Naive thymus-derived CD4-positive, alpha-beta T cell (primary cell): ENCODE measurements at regions of chr19 and their contacts with region 1.

Region 1: DNA sequence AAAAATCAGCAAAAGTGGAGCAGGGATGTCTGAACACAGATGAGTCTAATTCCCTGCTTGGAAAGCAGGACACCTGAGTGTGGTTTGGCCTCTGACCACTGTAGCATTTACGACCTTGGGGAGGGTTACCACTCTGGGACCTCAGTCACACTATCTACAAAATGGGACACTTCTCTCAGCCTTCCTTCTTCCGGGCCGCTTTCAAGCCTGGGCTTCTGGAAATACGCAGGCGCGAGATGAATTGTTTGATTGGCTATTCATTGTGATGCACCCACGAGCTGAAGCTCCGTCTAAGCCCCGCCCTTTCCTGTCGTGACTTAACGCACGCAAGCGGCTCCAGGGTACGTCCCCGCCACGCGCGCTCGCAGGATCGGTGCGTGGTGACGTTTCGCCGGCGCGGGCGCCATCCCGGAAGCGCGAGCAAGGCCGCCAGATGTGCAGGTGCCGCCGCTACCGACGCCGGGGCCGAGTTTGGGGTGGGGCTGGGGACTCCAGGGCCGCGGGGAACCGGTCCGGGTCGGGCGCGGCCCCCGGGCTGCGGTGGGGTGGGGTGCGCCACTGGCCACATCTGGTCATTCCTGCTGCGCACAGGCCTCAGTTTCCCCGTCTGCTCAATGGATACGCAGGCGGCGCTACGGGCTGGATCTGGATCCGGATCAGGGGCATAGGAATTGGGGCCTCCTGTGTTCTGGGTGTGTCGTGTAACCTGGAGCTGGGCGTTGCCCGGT is at the start of gene KXD1:
- DNase-seq: peak; percentile 89 to 99 (median 97)
- ATAC-seq: peak; percentile 100
- H3K4me3 ChIP-seq: peak within 1 kb of the TSS; percentile 84
- H3K4me3 Mint-ChIP-seq: peak within 1 kb of the TSS; percentile 83 to 93 (median 91)
- H3K27ac ChIP-seq: peak within 1 kb of the TSS; percentile 95
- H3K27ac Mint-ChIP-seq: peak within 1 kb of the TSS; percentile 87 to 97 (median 96)
- H3K4me1 ChIP-seq: peaks cover 13 to 15% of the 10 kb centered on the region in 2 donors
- H3K4me1 Mint-ChIP-seq: peaks cover 6 to 25% (median 23%) of the 10 kb centered on the region in 7 donors
- H3K27me3 ChIP-seq: no peaks in the 10 kb centered on the region
- H3K27me3 Mint-ChIP-seq: no peaks in the 10 kb centered on the region
- total RNA-seq, gene KXD1: 74.7 to 108 (median 99.9) TPM

Region 2: DNA sequence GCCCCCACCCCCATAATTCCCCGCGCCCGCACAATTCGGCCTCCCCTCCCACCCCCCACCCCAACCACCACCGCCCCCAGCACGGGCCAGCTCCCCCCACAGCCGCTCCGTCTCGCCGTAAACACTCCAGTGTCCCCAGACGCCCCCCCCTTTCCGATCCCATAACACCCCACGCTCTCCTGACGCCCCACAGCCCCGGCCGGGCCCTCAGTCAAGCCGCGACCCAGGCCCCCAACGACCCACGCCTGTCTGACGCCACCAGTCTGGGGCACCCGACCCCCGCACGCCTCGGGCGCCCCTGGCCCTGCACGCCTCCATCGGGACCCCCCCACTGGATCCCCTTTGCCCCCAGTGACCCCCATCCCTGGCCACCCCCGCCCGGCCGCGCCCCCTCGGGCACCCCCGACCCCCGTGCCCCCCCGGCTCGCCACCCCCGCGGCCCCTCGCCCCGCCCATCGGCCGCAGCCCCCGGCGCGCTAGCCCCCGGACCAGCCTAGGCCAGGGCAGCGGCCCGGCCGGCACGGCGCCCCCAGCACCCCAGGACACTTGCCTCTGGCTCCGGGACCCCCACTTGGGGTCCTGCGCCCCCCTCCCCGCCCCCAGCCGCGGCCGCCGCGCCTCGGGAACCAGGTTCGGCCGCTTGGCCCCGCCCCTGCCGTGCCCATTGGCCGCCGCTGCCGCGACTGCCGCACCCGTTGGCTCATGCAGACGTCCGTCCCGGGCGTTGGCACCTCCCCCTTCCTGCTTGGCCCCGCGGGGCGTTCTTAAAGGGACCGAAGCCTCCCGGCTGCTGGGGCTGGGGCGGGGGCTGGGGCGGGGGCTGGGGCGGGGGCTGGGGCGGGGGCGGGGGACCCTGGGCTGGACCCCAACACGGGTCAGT is 14.5 kb before region 1 on chr19 and contains the start of gene FKBP8:
- CTCF ChIA-PET with region 1: interaction called, 7 read pairs
- POLR2A ChIA-PET with region 1: interaction called, 42 read pairs
- intact Hi-C with region 1: loop called (anchors 1 kb)
- DNase-seq: peak; percentile 84 to 95 (median 91)
- ATAC-seq: peak; percentile 97
- H3K4me3 ChIP-seq: peak within 1 kb of the TSS; percentile 68
- H3K4me3 Mint-ChIP-seq: peak within 1 kb of the TSS; percentile 90 to 99 (median 94)
- H3K27ac ChIP-seq: peak within 1 kb of the TSS; percentile 87
- H3K27ac Mint-ChIP-seq: peak within 1 kb of the TSS; percentile 89 to 100 (median 97)
- H3K4me1 ChIP-seq: peaks cover 15 to 16% of the 10 kb centered on the region in 2 donors
- H3K4me1 Mint-ChIP-seq: peaks cover 14 to 31% (median 26%) of the 10 kb centered on the region in 7 donors
- H3K27me3 ChIP-seq: no peaks in the 10 kb centered on the region
- H3K27me3 Mint-ChIP-seq: no peaks in the 10 kb centered on the region
- total RNA-seq, gene FKBP8: 137 to 241 (median 221) TPM

Region 3: DNA sequence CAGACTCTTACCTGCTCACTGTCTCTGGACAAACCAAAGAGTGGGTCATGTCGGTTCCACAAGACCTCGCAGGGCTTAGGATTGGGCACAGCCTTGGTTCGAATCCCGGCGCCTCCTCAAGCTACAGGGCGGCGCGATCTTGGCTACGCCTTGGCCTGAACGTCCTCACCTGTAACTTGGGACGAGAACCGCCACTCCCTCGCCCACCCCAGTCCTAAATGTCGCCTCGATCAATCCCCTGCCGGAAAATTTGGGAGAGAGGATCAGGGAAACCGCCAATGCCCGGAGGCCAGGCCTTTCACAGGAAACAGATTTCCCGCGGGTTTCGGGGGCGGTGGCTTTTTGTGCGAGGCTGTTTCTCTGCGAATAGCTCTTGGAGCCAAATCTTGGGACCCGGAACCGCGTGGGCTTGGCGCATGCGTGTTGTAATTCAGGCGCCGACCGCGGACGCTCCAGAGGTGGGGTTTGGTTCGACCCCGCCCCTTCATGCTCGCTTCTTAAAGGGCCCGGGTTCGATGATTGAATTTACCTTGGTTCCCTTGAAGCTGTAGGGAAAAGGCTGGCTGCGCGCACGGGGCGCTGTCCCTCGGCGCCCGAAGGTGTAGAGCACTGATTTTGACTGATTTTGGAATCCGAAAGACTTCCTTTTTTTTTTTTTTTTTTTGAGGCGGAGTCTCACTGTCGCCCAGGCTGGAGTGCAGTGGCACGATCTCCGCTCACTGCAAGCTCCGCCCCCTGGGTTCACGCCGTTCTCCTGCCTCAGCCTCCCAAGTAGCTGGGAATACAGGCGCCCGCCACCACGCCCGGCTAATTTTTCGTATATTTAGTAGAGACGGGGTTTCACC is 645.6 kb after region 1 on chr19 and contains the start of gene NR2C2AP:
- CTCF ChIA-PET with region 1: no interaction called
- POLR2A ChIA-PET with region 1: no interaction called
- intact Hi-C with region 1: no loop called
- DNase-seq: peak; percentile 80 to 94 (median 89)
- ATAC-seq: peak; percentile 95
- H3K4me3 ChIP-seq: peak within 1 kb of the TSS; percentile 95
- H3K4me3 Mint-ChIP-seq: peak within 1 kb of the TSS; percentile 90 to 94 (median 92)
- H3K27ac ChIP-seq: peak within 1 kb of the TSS; percentile 89
- H3K27ac Mint-ChIP-seq: peak within 1 kb of the TSS; percentile 88 to 96 (median 93)
- H3K4me1 ChIP-seq: peaks cover 23% of the 10 kb centered on the region in 2 donors
- H3K4me1 Mint-ChIP-seq: peaks cover 22 to 36% (median 30%) of the 10 kb centered on the region in 7 donors
- H3K27me3 ChIP-seq: no peaks in the 10 kb centered on the region
- H3K27me3 Mint-ChIP-seq: peaks cover 0 to 12% (median 0%) of the 10 kb centered on the region in 5 donors
- total RNA-seq, gene NR2C2AP: 13.8 to 33.4 (median 28.7) TPM

Region 4: GRCh38 chr19:19459707-19460251 is 902.1 kb after region 1 on chr19:
- CTCF ChIA-PET with region 1: no interaction called
- POLR2A ChIA-PET with region 1: no interaction called
- intact Hi-C with region 1: no loop called
- DNase-seq: peak in 8 of 9 donors; percentile 49 to 75 (median 61)
- ATAC-seq: peak; percentile 72
- H3K4me3 ChIP-seq: peak overlapping the region; percentile 55
- H3K4me3 Mint-ChIP-seq: peak overlapping the region; percentile 85 to 92 (median 91)
- H3K27ac ChIP-seq: peak overlapping the region; percentile 82
- H3K27ac Mint-ChIP-seq: peak overlapping the region; percentile 94 to 99 (median 98)
- H3K4me1 ChIP-seq: peaks cover 82% of the 10 kb centered on the region in 2 donors
- H3K4me1 Mint-ChIP-seq: peaks cover 63 to 84% (median 72%) of the 10 kb centered on the region in 7 donors
- H3K27me3 ChIP-seq: no peaks in the 10 kb centered on the region
- H3K27me3 Mint-ChIP-seq: no peaks in the 10 kb centered on the region